Psoas muscle (tissue), 8 donors: ENCODE measurements at regions of chr5 and their contacts with region 1.

Region 1: GRCh38 chr5:180090098-180090768 is 18.7 kb upstream of the RNF130 start:
- DNase-seq: peak; percentile 76 to 87
- ATAC-seq: peak; percentile 89 to 95 (median 91)
- H3K4me3 ChIP-seq: peak overlapping the region; percentile 67
- H3K27ac ChIP-seq: peak overlapping the region; percentile 31
- H3K4me1 ChIP-seq: peaks cover 4% of the 10 kb centered on the region
- H3K27me3 ChIP-seq: no peaks in the 10 kb centered on the region
- CTCF ChIP-seq: peak; percentile 93

Region 2: GRCh38 chr5:179806250-179807222 is 283.7 kb before region 1 on chr5 and contains the start of gene MGAT4B:
- intact Hi-C with region 1: loop called in 1 of 2 experiments (anchors 10 kb)
- DNase-seq: peak; percentile 79 to 85
- ATAC-seq: peak; percentile 79 to 85 (median 84)
- H3K4me3 ChIP-seq: peak within 1 kb of the TSS; percentile 97
- H3K27ac ChIP-seq: peak within 1 kb of the TSS; percentile 96
- H3K4me1 ChIP-seq: peaks cover 41% of the 10 kb centered on the region
- H3K27me3 ChIP-seq: no peaks in the 10 kb centered on the region
- CTCF ChIP-seq: no peak
- total RNA-seq, gene MGAT4B: 29.3 to 58.4 (median 50.7) TPM

Region 3: DNA sequence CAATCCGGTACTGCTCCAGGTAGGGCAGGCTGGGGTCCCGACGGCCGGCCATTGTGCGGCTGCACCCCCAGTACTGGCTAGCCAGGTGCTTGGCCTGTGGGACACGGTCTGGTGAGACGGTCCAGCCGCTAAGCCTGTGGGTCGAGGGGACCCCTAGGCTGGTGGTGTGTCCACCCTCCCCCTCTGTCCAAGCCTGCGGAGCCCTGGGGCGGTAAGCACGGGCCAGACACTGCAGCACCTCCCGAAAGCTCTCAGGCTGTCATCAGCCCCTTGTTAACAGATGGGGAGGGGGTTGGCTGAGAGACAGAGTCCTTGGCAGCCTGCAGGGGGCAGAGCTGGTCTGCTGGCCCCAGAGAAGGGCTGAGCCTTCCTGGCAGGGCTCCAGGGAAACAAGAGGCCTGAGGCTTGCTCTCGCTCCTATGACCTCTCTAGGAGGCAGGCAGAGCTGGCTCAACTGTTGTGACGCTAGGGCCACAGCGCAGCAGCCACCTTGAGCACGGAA is 219.8 kb before region 1 on chr5:
- intact Hi-C with region 1: loop called in 1 of 2 experiments (anchors 5 kb)
- DNase-seq: peak; percentile 68 to 80
- ATAC-seq: peak; percentile 85 to 92 (median 86)
- H3K4me3 ChIP-seq: no peak overlapping the region
- H3K27ac ChIP-seq: no peak overlapping the region
- H3K4me1 ChIP-seq: peaks cover 6% of the 10 kb centered on the region
- H3K27me3 ChIP-seq: no peaks in the 10 kb centered on the region
- CTCF ChIP-seq: peak; percentile 51

Region 4: GRCh38 chr5:179986328-179986727 is 103.9 kb before region 1 on chr5:
- intact Hi-C with region 1: loop called (anchors 2 to 5 kb)
- DNase-seq: no peak
- ATAC-seq: peak; percentile 55 to 89 (median 76)
- H3K4me3 ChIP-seq: no peak overlapping the region
- H3K27ac ChIP-seq: no peak overlapping the region
- H3K4me1 ChIP-seq: no peaks in the 10 kb centered on the region
- H3K27me3 ChIP-seq: no peaks in the 10 kb centered on the region
- CTCF ChIP-seq: peak; percentile 31

Region 5: DNA sequence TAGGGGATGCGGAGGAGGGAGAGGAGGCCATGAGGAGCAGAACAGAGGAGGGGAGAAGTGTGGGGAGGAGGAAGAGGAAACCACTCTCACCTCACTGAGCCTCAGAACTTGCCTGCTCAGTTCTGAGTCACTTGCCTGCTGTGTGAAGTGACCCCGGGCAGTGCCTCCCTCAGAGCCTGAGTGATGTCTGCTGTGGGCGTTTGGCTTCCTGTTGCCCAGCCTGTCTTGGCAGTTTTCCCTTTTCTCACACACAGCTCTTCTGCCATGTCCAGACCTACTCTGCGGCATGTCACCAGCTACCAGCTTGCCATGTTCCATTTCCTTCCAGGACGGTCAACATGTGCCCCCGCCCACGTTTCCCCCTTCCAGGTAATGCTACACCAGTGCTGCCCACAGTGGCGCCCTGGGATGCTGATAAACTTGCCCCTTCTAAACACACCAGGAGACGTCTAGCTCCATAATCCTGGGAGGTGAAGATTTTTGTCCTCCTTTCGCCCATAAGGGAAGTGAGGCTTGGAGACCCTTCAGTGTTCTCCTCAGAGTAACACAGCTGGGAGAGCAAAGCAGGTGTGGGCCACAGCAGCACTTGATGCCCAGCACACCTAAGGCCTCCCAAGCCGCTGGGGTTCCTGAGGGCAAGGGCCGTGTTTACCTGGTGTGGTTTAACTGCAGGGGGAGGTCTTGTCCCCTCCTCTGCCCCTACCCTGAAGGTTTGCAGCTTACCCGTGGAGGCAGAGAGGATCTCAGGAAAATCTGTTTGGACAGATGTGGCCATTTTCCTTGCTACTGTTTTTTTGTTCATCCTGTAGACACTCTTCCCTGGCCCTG is 45.1 kb after region 1 on chr5:
- intact Hi-C with region 1: no loop called
- DNase-seq: no peak
- ATAC-seq: no peak
- H3K4me3 ChIP-seq: no peak overlapping the region
- H3K27ac ChIP-seq: no peak overlapping the region
- H3K4me1 ChIP-seq: no peaks in the 10 kb centered on the region
- H3K27me3 ChIP-seq: peaks cover 0 to 15% (median 2%) of the 10 kb centered on the region in 3 donors
- CTCF ChIP-seq: no peak